Pancreas (tissue), 10 donors: ENCODE measurements at regions of chr11 and their contacts with region 1.

Region 1: DNA sequence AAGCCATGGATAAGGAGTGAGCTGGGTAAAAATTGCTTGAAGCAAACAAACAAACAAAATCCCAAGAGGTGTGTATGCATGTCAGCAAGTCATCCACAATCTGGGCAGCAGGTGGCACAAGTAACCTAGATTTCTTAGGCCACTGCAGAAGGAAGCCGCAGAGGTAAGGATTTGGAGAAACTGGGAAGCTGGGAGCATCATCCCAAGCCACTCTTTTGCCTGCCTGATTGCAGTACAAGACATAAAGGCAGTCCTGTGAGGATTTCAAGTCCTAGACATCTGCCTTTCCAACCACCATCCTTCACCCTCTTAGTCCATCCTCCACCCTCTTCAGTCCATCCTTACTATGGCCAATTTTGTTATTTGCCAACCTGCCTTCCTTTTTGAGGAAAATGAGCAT is 67.2 kb upstream of the BMAL1 start:
- DNase-seq: peak in 4 of 6 donors; percentile 35 to 67 (median 44)
- ATAC-seq: peak; percentile 54 to 89 (median 77)
- H3K4me3 ChIP-seq: no peak overlapping the region
- H3K27ac ChIP-seq: no peak overlapping the region
- H3K4me1 ChIP-seq: peaks cover 0 to 10% (median 0%) of the 10 kb centered on the region in 3 donors
- H3K27me3 ChIP-seq: no peaks in the 10 kb centered on the region
- CTCF ChIP-seq: peak in 3 of 4 donors; percentile 32 to 51 (median 43)

Region 2: GRCh38 chr11:13152736-13153533 is 57.5 kb before region 1 on chr11:
- intact Hi-C with region 1: no loop called
- DNase-seq: no peak
- ATAC-seq: peak in 2 of 4 donors; percentile 56 to 64
- H3K4me3 ChIP-seq: no peak overlapping the region
- H3K27ac ChIP-seq: no peak overlapping the region
- H3K4me1 ChIP-seq: no peaks in the 10 kb centered on the region
- H3K27me3 ChIP-seq: no peaks in the 10 kb centered on the region
- CTCF ChIP-seq: peak in 3 of 4 donors; percentile 12 to 17 (median 17)

Region 3: DNA sequence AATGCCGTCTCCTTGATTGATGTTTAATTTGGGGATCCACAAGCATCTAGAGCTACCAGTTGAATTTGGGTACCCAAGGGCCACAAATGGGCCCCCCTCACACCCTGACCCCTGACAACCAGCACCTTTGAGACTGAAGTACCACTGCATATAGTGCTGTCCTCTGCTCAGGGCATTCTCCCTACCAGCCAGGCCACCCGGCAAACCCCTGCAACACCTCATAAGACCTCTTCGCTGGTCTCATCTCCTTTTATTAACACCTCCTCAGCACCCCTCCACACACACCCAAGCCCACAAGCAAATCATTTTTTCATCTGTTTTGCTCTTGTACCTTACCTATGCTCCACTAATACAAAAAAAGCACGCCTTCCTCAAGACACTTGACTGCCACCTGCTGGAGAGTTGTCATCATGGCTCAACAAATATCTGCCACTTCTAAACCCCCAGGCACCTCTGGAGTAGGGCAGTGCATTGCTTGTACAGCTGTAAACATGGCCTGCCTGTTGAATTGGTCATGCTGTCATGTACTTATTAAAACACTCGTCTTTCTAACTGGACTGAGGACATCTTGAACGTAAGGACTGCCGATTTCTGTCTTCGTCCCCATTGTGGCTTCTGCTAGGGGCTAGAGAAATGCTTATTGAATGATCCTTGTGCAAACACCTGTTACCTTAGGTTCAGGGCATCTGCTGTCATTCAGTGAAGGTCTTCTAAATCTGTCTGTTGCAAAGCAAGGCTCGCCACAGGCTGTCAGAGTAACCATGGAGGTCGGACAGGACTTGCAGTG is 133.7 kb after region 1 on chr11:
- intact Hi-C with region 1: loop called in 2 of 3 experiments (anchors 5 kb)
- DNase-seq: peak in 5 of 6 donors; percentile 44 to 78 (median 59)
- ATAC-seq: peak; percentile 63 to 81 (median 80)
- H3K4me3 ChIP-seq: no peak overlapping the region
- H3K27ac ChIP-seq: no peak overlapping the region
- H3K4me1 ChIP-seq: peaks cover 0 to 9% (median 6%) of the 10 kb centered on the region in 3 donors
- H3K27me3 ChIP-seq: no peaks in the 10 kb centered on the region
- CTCF ChIP-seq: peak; percentile 59 to 72 (median 68)